Activated T-helper 2 cell treated with anti-CD3 and anti-CD28 coated beads, Interferon-gamma antibody, Interleukin-2, Interleukin-4, amounts not matched to agents 10 μg/mL and 5 μg/mL and 100 μg/mL, durations not matched to agents 14 hours and 24 hours and 36 hours (primary cell): ENCODE measurements at regions of chr12 and their contacts with region 1.

Region 1: DNA sequence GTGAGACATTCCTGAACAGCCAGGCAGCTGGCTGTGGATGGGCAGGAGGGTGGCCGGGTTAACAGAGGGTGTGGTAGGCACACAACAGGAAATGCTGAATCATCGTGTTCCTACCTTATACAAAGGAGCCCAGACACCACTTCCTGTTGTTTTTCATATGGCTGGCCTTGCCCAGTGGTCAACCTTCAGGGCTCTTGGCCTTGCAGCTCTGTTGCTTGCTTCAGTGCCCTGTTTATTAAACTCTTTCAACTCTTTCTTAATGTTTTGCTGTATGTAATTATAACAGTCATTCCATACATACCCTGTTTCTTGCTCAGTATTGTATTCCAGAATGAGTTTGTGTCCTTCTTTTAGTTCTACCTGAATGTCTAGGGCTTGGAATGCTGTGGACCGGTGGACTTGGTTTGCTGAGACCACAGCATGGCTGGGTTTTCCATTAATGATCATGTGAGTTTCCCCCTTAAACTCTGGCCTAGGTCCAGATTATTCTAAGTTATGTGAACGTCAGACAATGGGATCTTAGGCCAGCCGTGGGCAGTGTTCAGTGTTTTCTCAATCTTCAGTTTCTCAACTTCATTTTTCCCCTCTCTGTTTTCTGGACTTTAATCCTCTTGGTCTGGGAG is 11.9 kb downstream of the CFAP54 start:
- DNase-seq: no peak
- H3K4me3 Mint-ChIP-seq: no peak overlapping the region
- H3K27ac Mint-ChIP-seq: peak overlapping the region; percentile 74
- H3K4me1 Mint-ChIP-seq: peaks cover 48% of the 10 kb centered on the region
- H3K27me3 Mint-ChIP-seq: no peaks in the 10 kb centered on the region

Region 2: GRCh38 chr12:96335270-96335669 is 166.0 kb before region 1 on chr12:
- intact Hi-C with region 1: loop called (anchors 5 kb)
- DNase-seq: no peak
- H3K4me3 Mint-ChIP-seq: peak overlapping the region; percentile 28
- H3K27ac Mint-ChIP-seq: peak overlapping the region; percentile 28
- H3K4me1 Mint-ChIP-seq: peaks cover 32% of the 10 kb centered on the region
- H3K27me3 Mint-ChIP-seq: no peaks in the 10 kb centered on the region